Activated CD4-positive, alpha-beta memory T cell treated with anti-CD3 and anti-CD28 coated beads for 36 hours (primary cell): ENCODE measurements at regions of chr16 and their contacts with region 1.

Region 1: DNA sequence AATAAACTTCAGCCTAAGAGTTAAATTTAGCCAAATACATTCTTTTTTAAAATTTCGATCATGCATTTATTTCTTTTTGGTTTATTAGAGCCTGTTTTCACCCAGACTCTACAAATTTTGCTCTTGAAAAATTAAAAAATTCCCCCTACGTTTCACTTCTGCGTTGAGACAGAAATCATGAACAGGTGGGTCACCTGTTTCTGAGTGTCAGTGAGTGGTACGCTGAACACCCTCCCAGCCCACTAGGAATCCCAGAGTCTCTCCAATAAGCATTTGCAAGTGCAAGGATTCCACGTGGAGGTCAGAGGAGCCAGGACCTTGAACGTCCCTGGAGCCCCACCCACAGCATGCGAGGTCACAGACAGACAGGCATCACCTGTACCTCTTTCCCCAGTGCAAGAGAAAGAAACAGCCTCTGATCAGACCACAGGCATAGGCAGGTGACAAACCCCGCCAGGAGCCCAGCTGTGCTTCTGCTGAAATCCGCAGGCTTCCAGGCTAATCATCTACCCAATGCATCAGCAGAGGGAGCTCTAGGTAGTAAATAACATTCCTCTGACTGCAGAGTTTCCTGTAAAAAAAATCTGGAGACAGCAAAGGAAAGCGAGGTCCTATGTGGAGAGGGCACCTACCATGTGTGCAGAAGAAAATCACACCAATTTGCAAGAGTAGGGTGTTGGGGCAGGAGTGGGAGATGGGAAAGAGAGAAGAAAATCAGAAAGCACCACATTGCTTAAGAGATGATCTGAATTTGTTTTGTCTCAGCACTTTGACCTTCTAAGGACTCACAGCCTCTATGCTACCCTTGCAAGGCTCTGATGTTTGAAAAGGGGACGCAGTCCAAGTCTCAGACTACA is 5.9 kb upstream of the XYLT1 start:
- DNase-seq: peak; percentile 53
- H3K4me3 Mint-ChIP-seq: no peak overlapping the region
- H3K27ac Mint-ChIP-seq: no peak overlapping the region
- H3K4me1 Mint-ChIP-seq: peaks cover 29% of the 10 kb centered on the region
- H3K27me3 Mint-ChIP-seq: peaks cover 15% of the 10 kb centered on the region

Region 2: GRCh38 chr16:15988268-15989013 is 1488.2 kb before region 1 on chr16:
- CTCF ChIA-PET with region 1: no interaction called
- POLR2A ChIA-PET with region 1: no interaction called
- intact Hi-C with region 1: no loop called
- DNase-seq: no peak
- H3K4me3 Mint-ChIP-seq: no peak overlapping the region
- H3K27ac Mint-ChIP-seq: no peak overlapping the region
- H3K4me1 Mint-ChIP-seq: peaks cover 43% of the 10 kb centered on the region
- H3K27me3 Mint-ChIP-seq: no peaks in the 10 kb centered on the region

Region 3: DNA sequence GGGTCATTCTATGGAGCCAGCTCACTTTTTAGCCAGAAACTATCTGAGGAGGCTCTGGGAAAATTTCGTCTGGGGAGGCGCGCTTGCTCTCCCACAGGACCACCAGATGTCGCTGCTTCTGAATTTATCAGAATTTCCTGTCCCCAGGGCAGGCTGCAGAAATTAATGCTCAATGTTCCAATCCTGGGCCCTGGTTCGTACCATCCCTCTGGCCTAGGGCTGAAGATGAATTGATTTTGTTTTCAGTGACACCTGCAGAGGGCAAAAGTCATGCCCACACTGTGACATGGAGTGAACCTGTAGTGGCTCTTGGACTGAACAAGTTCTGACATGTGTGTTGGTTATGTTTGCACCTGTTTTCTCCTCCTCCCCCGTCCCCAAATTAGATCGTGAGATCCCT is 615.1 kb before region 1 on chr16:
- CTCF ChIA-PET with region 1: no interaction called
- POLR2A ChIA-PET with region 1: no interaction called
- intact Hi-C with region 1: loop called (anchors 10 kb)
- DNase-seq: peak; percentile 48
- H3K4me3 Mint-ChIP-seq: no peak overlapping the region
- H3K27ac Mint-ChIP-seq: no peak overlapping the region
- H3K4me1 Mint-ChIP-seq: no peaks in the 10 kb centered on the region
- H3K27me3 Mint-ChIP-seq: peaks cover 5% of the 10 kb centered on the region

Region 4: DNA sequence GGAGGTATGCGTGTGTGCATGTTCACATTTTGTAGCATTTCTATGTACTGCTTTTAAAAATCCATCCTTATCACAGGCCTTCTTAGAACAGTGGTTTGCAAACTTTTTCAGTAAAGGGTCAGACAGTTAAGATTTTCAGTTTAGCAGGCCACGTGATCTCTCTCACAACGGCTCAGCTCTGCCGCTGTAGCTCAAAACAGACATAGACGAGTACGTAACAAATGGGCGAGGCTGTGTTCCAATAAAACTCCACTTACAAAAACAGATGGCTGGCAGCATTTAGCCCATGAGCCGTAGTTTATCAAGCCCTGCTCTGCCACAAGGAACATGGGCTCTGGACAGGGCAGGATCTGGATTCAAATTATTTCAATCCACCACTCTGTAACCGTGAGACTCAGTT is 147.7 kb before region 1 on chr16:
- CTCF ChIA-PET with region 1: no interaction called
- POLR2A ChIA-PET with region 1: no interaction called
- intact Hi-C with region 1: no loop called
- DNase-seq: no peak
- H3K4me3 Mint-ChIP-seq: no peak overlapping the region
- H3K27ac Mint-ChIP-seq: no peak overlapping the region
- H3K4me1 Mint-ChIP-seq: peaks cover 4% of the 10 kb centered on the region
- H3K27me3 Mint-ChIP-seq: no peaks in the 10 kb centered on the region

Region 5: GRCh38 chr16:17529982-17530765 is 53.5 kb after region 1 on chr16:
- CTCF ChIA-PET with region 1: no interaction called
- POLR2A ChIA-PET with region 1: no interaction called
- intact Hi-C with region 1: loop called (anchors 1 kb)
- DNase-seq: peak; percentile 51
- H3K4me3 Mint-ChIP-seq: peak overlapping the region; percentile 62
- H3K27ac Mint-ChIP-seq: peak overlapping the region; percentile 71
- H3K4me1 Mint-ChIP-seq: peaks cover 14% of the 10 kb centered on the region
- H3K27me3 Mint-ChIP-seq: no peaks in the 10 kb centered on the region

Region 6: GRCh38 chr16:17578921-17579874 is 102.6 kb after region 1 on chr16:
- CTCF ChIA-PET with region 1: interaction called, 10 read pairs
- POLR2A ChIA-PET with region 1: no interaction called
- intact Hi-C with region 1: loop called (anchors 2 kb)
- DNase-seq: peak; percentile 60
- H3K4me3 Mint-ChIP-seq: no peak overlapping the region
- H3K27ac Mint-ChIP-seq: no peak overlapping the region
- H3K4me1 Mint-ChIP-seq: peaks cover 3% of the 10 kb centered on the region
- H3K27me3 Mint-ChIP-seq: peaks cover 6% of the 10 kb centered on the region